PC-3 (cell line): ENCODE measurements at regions of chr2 and their contacts with region 1.

Region 1: DNA sequence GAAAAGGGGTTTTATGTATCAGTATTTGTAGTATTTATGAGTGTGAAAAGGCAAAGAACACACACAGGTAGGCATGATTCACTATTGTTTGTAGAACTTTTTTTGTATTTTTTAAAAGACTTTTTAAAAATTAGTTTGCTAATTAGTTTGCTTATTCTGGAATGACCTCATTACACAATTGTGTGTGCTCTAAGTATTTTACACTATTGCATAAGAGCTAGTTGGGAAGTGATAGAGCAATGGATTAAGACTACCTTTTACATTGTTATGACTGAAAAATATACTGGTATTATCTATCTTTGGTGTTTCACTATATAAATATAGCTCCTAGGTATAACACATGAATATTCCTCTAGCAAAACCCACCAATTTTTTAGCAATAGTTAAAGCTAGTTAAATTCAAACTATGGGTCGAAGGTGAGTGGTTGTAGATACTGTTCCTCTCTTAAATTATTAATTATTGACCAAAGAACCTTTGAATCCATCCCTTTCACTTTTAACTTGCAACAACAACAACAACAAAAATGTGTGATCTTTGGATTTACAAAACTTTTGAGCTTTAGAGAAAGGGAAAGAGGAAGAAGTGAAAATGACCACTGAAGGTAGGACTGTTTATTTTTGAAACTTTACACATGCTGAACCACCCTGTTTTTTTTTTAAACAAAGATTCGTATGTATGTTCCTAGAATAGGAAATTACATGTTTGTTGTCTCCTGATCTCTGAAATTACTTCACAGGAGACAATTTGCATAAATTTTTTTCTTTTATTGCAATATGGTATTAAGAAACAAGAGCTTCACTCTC is 18.7 kb downstream of the ITPRID2 start:
- DNase-seq: no peak
- ATAC-seq: no peak
- H3K4me3 ChIP-seq: no peak overlapping the region
- H3K27ac ChIP-seq: no peak overlapping the region
- H3K4me1 ChIP-seq: no peaks in the 10 kb centered on the region
- H3K27me3 ChIP-seq: no peaks in the 10 kb centered on the region
- CTCF ChIP-seq: no peak

Region 2: DNA sequence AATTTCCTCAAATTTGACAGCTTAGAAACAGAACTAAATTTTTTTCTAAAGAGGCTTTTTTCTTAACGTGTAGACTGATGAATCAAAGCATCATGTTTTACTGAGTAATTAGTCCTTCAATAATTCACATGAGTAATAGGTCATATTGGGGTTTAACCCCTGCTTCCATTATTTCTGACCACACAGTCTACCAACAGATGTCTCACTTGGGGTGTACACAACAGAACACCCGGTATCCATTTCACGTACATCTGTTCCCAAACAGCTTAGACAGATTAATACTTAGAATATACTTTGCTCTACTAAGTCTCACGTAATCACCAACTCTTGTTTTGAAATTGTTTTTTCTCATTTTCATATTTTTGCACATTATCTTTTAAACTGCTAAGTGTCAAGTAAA is 268.1 kb before region 1 on chr2:
- CTCF ChIA-PET with region 1: no interaction called
- POLR2A ChIA-PET with region 1: interaction called, 10 read pairs
- intact Hi-C with region 1: no loop called
- DNase-seq: peak; percentile 6
- ATAC-seq: no peak
- H3K4me3 ChIP-seq: no peak overlapping the region
- H3K27ac ChIP-seq: no peak overlapping the region
- H3K4me1 ChIP-seq: no peaks in the 10 kb centered on the region
- H3K27me3 ChIP-seq: no peaks in the 10 kb centered on the region
- CTCF ChIP-seq: no peak